ENCODE measurements at regions of chr6 and their contacts with region 1.

Region 1: GRCh38 chr6:141403795-141404194 is 728.9 kb upstream of the GJE1 start:
- DNase-seq: no peak
- ATAC-seq: peak; percentile 24 to 56 (median 40)
- H3K4me3 ChIP-seq: peak overlapping the region; percentile 21 to 54 (median 41)
- H3K27ac ChIP-seq: peak overlapping the region; percentile 58 to 82 (median 76)
- H3K4me1 ChIP-seq: peaks cover 0 to 23% (median 5%) of the 10 kb centered on the region in 12 donors
- H3K27me3 ChIP-seq: no peaks in the 10 kb centered on the region
- CTCF ChIP-seq: no peak
- POLR2A ChIP-seq: no peak

Region 2: DNA sequence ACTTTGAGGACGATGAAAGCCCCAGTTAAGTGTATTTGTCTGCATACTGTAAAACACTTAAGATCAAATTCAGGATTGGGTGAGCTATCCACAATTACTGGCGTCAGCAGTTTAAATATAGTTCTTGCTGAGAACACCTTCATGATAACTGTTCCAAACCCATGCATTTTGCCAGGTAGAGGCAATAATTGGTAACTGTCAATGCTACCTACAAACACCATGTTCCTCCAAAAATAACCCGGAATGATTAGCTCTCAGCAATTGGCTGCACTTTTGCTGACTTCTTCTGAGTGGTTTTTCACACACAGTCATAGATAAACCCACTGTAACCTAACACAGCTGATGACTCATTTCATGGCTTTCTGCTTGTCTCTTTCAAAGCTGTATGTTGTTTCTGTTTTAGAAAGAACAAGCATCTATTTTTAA is 629.7 kb before region 1 on chr6:
- intact Hi-C with region 1: loop called in 1 of 10 experiments (anchors 10 kb)
- DNase-seq: peak in 4 of 5 donors; percentile 34 to 44 (median 36)
- ATAC-seq: peak; percentile 95 to 99 (median 98)
- H3K4me3 ChIP-seq: no peak overlapping the region
- H3K27ac ChIP-seq: peak overlapping the region; percentile 29 to 86 (median 64)
- H3K4me1 ChIP-seq: peaks cover 0 to 25% (median 8%) of the 10 kb centered on the region in 12 donors
- H3K27me3 ChIP-seq: no peaks in the 10 kb centered on the region
- CTCF ChIP-seq: no peak
- POLR2A ChIP-seq: no peak

Region 3: GRCh38 chr6:141169419-141169818 is 234.4 kb before region 1 on chr6:
- intact Hi-C with region 1: loop called in 2 of 10 experiments (anchors 5 to 10 kb)
- DNase-seq: no peak
- ATAC-seq: no peak
- H3K4me3 ChIP-seq: no peak overlapping the region
- H3K27ac ChIP-seq: no peak overlapping the region
- H3K4me1 ChIP-seq: peaks cover 0 to 17% (median 4%) of the 10 kb centered on the region in 12 donors
- H3K27me3 ChIP-seq: no peaks in the 10 kb centered on the region
- CTCF ChIP-seq: no peak
- POLR2A ChIP-seq: no peak

Region 4: GRCh38 chr6:141347086-141347485 is 56.7 kb before region 1 on chr6:
- intact Hi-C with region 1: no loop called
- DNase-seq: no peak
- ATAC-seq: no peak
- H3K4me3 ChIP-seq: no peak overlapping the region
- H3K27ac ChIP-seq: no peak overlapping the region
- H3K4me1 ChIP-seq: peaks cover 0 to 5% (median 0%) of the 10 kb centered on the region in 12 donors
- H3K27me3 ChIP-seq: no peaks in the 10 kb centered on the region
- CTCF ChIP-seq: no peak
- POLR2A ChIP-seq: no peak

Region 5: DNA sequence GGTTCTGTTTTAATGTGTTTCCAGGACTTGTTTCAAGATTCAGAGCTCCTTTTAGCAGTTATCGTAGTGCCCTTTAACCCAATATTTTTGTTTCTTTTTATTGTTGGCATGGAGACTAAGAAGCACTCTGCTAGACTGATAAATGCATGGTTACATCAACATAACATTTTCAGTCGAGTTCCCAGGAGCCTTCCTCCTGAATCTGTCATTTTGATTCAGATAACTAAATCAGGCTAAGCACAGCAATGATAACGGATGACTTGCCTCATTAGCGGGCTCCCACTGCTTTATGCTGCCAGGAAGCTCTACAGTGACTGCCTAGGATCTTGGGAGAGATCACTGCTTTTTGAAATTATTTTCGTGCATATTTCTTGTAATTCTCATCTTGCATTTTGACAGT is 43.8 kb before region 1 on chr6:
- intact Hi-C with region 1: loop called in 2 of 10 experiments (anchors 2 to 5 kb)
- DNase-seq: peak in 3 of 5 donors; percentile 7 to 25 (median 18)
- ATAC-seq: peak; percentile 71 to 94 (median 80)
- H3K4me3 ChIP-seq: peak overlapping the region in 6 of 12 donors; percentile 2 to 25 (median 6)
- H3K27ac ChIP-seq: peak overlapping the region in 9 of 12 donors; percentile 10 to 60 (median 48)
- H3K4me1 ChIP-seq: peaks cover 0 to 20% (median 4%) of the 10 kb centered on the region in 12 donors
- H3K27me3 ChIP-seq: no peaks in the 10 kb centered on the region
- CTCF ChIP-seq: no peak
- POLR2A ChIP-seq: no peak

Region 6: GRCh38 chr6:141464490-141464889 is 60.7 kb after region 1 on chr6:
- intact Hi-C with region 1: loop called in 1 of 10 experiments (anchors 5 kb)
- DNase-seq: peak in 1 of 5 donors; percentile 30
- ATAC-seq: peak; percentile 81 to 93 (median 88)
- H3K4me3 ChIP-seq: no peak overlapping the region
- H3K27ac ChIP-seq: peak overlapping the region; percentile 41 to 90 (median 74)
- H3K4me1 ChIP-seq: peaks cover 0 to 41% (median 17%) of the 10 kb centered on the region in 12 donors
- H3K27me3 ChIP-seq: no peaks in the 10 kb centered on the region
- CTCF ChIP-seq: no peak
- POLR2A ChIP-seq: no peak

Region 7: GRCh38 chr6:141562851-141563763 is 159.3 kb after region 1 on chr6:
- intact Hi-C with region 1: loop called in 1 of 10 experiments (anchors 10 kb)
- DNase-seq: peak in 4 of 5 donors; percentile 49 to 71 (median 58)
- ATAC-seq: peak; percentile 93 to 95 (median 94)
- H3K4me3 ChIP-seq: peak overlapping the region in 11 of 12 donors; percentile 8 to 52 (median 41)
- H3K27ac ChIP-seq: peak overlapping the region; percentile 43 to 85 (median 70)
- H3K4me1 ChIP-seq: peaks cover 0 to 18% (median 10%) of the 10 kb centered on the region in 12 donors
- H3K27me3 ChIP-seq: no peaks in the 10 kb centered on the region
- CTCF ChIP-seq: peak; percentile 82 to 95 (median 90)
- POLR2A ChIP-seq: no peak

Region 8: DNA sequence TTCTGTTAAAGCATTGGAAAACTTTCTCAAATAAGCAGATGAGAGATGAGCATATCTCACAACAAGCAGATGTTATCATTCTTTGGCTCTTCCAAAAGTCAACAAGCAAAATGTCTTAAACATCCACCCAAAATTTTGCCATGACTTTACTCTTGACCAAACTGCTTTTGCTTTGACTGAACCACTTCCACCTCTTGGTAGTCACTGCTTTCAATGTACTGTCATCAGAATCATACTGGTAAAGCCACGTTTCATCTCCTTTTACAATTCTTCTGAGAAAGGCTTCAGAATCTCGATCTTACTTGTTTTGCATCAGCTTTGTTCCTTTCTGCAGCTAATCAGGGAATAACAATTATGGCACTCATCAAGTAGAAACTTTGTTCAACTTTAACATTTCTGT is 230.5 kb after region 1 on chr6:
- intact Hi-C with region 1: no loop called
- DNase-seq: no peak
- ATAC-seq: no peak
- H3K4me3 ChIP-seq: no peak overlapping the region
- H3K27ac ChIP-seq: no peak overlapping the region
- H3K4me1 ChIP-seq: no peaks in the 10 kb centered on the region
- H3K27me3 ChIP-seq: no peaks in the 10 kb centered on the region
- CTCF ChIP-seq: no peak
- POLR2A ChIP-seq: no peak

Measured in heart left ventricle (tissue), 16 donors.